A549 (cell line): ENCODE measurements at regions of chr4 and their contacts with region 1.

Region 1: GRCh38 chr4:138870737-138871554 is 144.6 kb upstream of the NOCT start:
- DNase-seq: peak; percentile 33 to 67
- ATAC-seq: peak; percentile 67 to 81
- H3K4me3 ChIP-seq: no peak overlapping the region
- H3K27ac ChIP-seq: no peak overlapping the region
- H3K4me1 ChIP-seq: peaks cover 6% of the 10 kb centered on the region
- CTCF ChIP-seq: peak; percentile 69
- EP300 ChIP-seq: no peak
- POLR2A ChIP-seq: no peak
- RAD21 ChIP-seq: peak; percentile 84 to 86

Region 2: GRCh38 chr4:137735561-137736104 is 1135.3 kb before region 1 on chr4:
- CTCF ChIA-PET with region 1: interaction called, 11 read pairs
- POLR2A ChIA-PET with region 1: no interaction called
- DNase-seq: no peak
- ATAC-seq: peak in 1 of 2 experiments; percentile 39; a peak in 1 of 6 replicates
- H3K4me3 ChIP-seq: no peak overlapping the region
- H3K27ac ChIP-seq: no peak overlapping the region
- H3K4me1 ChIP-seq: no peaks in the 10 kb centered on the region
- CTCF ChIP-seq: no peak
- EP300 ChIP-seq: no peak
- POLR2A ChIP-seq: no peak
- RAD21 ChIP-seq: no peak

Region 3: GRCh38 chr4:138035781-138036258 is 835.1 kb before region 1 on chr4:
- CTCF ChIA-PET with region 1: interaction called, 10 read pairs
- POLR2A ChIA-PET with region 1: no interaction called
- DNase-seq: peak; percentile 38 to 56
- ATAC-seq: peak; percentile 99
- H3K4me3 ChIP-seq: no peak overlapping the region
- H3K27ac ChIP-seq: peak overlapping the region in 1 of 2 experiments; percentile 61; a peak in 3 of 6 replicates
- H3K4me1 ChIP-seq: peaks cover 13% of the 10 kb centered on the region
- CTCF ChIP-seq: peak; percentile 73
- EP300 ChIP-seq: no peak
- POLR2A ChIP-seq: no peak
- RAD21 ChIP-seq: peak; percentile 87 to 89

Region 4: DNA sequence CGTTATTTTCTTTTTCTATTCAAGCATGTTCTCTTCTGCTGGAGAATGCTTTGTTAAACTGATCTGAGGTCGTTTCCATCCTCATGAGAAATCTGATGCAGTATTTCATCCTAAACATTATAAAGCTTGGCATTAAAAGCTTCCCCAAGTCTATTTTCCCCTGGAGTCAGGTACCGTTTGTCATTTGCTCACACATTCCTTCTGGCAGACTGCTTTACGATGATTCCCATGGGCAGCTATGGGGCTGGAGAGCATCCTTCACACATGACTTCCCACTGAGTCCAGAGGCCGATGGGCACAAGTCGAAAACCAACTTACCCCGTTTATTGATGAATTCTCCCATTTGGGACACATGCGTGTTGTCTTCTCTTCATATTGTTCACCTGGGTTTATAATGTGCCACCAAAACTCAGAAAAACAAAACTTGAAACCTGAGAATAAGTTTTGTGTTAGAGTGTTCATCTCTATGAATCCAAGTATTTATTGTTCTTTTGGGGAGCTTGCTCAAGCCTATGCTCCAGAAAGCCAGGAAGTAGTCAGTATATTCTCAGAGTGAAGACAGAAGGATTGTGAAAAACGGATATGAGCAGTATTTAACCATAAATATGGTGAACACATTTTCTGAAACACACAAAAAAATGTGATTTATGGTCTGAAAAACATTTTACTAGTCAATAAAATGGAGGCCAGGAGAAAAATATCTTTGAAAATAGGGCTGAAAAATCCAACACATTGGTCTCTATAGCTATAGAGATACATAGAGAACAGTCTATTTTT is 154.2 kb before region 1 on chr4:
- CTCF ChIA-PET with region 1: no interaction called
- POLR2A ChIA-PET with region 1: no interaction called
- DNase-seq: no peak
- ATAC-seq: no peak
- H3K4me3 ChIP-seq: no peak overlapping the region
- H3K27ac ChIP-seq: no peak overlapping the region
- H3K4me1 ChIP-seq: no peaks in the 10 kb centered on the region
- CTCF ChIP-seq: no peak
- EP300 ChIP-seq: no peak
- POLR2A ChIP-seq: no peak
- RAD21 ChIP-seq: no peak

Region 5: GRCh38 chr4:138910607-138911336 is 39.8 kb after region 1 on chr4:
- CTCF ChIA-PET with region 1: interaction called, 19 read pairs
- POLR2A ChIA-PET with region 1: interaction called, 3 read pairs
- DNase-seq: peak; percentile 57 to 90
- ATAC-seq: peak; percentile 88 to 89
- H3K4me3 ChIP-seq: peak overlapping the region; percentile 27
- H3K27ac ChIP-seq: peak overlapping the region; percentile 78 to 82
- H3K4me1 ChIP-seq: peaks cover 34% of the 10 kb centered on the region
- CTCF ChIP-seq: no peak
- EP300 ChIP-seq: no peak
- POLR2A ChIP-seq: no peak
- RAD21 ChIP-seq: no peak

Region 6: GRCh38 chr4:139083956-139084803 is 213.2 kb after region 1 on chr4:
- CTCF ChIA-PET with region 1: no interaction called
- POLR2A ChIA-PET with region 1: no interaction called
- DNase-seq: peak; percentile 60 to 96
- ATAC-seq: peak; percentile 77 to 85
- H3K4me3 ChIP-seq: peak overlapping the region; percentile 79
- H3K27ac ChIP-seq: peak overlapping the region; percentile 97 to 98
- H3K4me1 ChIP-seq: peaks cover 23% of the 10 kb centered on the region
- CTCF ChIP-seq: no peak
- EP300 ChIP-seq: no peak
- POLR2A ChIP-seq: peak; percentile 41
- RAD21 ChIP-seq: no peak

Region 7: DNA sequence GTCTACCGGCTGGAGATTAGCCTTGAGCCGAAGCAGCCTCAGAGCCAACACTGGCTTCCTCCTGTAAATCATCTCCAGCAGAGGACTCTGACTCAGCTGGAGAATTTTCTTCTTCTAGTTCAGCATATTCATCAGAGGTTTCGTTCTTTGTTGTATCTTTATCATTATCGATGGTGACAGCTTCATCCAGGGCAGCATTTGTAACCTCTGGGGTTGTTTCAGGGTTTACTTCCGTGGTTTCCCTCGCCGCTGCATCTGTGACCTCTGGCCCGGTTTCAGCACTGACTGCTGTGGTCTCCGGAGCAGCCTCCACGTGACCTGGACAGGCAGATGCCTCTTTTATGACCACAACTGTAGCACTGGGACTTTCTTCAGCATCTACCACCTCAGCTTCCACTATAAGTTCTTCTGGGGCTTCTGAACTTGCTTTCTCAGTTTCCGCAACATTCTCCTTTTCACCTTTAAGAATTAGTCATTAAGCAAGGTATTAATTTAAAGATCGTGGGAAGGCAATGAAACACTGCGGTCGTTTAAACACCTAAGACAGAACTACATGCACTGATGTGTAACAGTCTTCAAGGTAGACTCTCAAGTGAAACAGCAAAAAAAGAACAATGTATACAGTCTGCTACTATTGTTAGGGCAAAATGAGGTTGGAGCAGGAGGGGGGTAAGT is 395.8 kb after region 1 on chr4:
- CTCF ChIA-PET with region 1: no interaction called
- POLR2A ChIA-PET with region 1: no interaction called
- DNase-seq: peak; percentile 48 to 64
- ATAC-seq: peak; percentile 93 to 95
- H3K4me3 ChIP-seq: peak overlapping the region; percentile 35
- H3K27ac ChIP-seq: peak overlapping the region; percentile 80 to 85
- H3K4me1 ChIP-seq: peaks cover 19% of the 10 kb centered on the region
- CTCF ChIP-seq: no peak
- EP300 ChIP-seq: no peak
- POLR2A ChIP-seq: no peak
- RAD21 ChIP-seq: no peak